Psoas muscle (tissue), 8 donors: ENCODE measurements at regions of chrX and their contacts with region 1.

Region 1: DNA sequence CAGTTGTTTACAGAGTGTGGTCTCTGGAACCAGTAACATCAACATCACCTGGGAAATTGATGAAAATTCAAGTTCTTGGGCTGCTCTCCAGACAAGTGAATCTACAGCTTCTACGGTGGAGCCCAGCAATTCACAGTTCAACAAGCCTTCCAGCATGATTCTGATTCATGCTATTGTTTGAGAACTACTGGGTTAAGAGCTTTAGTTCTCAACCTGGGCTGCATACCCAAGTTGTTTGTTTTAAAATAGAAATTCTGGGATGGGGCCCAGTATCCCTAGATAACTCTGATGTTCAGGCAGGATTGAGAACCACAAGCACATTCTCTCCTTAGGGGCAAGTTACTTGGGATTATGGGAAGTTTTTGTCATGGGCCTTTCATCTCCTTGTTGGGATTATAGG is 37.9 kb upstream of the PGK1 start:
- DNase-seq: no peak
- ATAC-seq: no peak
- H3K4me3 ChIP-seq: no peak overlapping the region
- H3K27ac ChIP-seq: no peak overlapping the region
- H3K4me1 ChIP-seq: no peaks in the 10 kb centered on the region
- H3K27me3 ChIP-seq: peaks cover 0 to 1% (median 0%) of the 10 kb centered on the region in 3 donors
- CTCF ChIP-seq: no peak

Region 2: GRCh38 chrX:78119521-78120227 is 53.6 kb after region 1 on chrX:
- intact Hi-C with region 1: loop called in 1 of 2 experiments (anchors 2 kb)
- DNase-seq: no peak
- ATAC-seq: peak in 1 of 4 donors; percentile 64
- H3K4me3 ChIP-seq: no peak overlapping the region
- H3K27ac ChIP-seq: no peak overlapping the region
- H3K4me1 ChIP-seq: no peaks in the 10 kb centered on the region
- H3K27me3 ChIP-seq: no peaks in the 10 kb centered on the region
- CTCF ChIP-seq: no peak

Region 3: GRCh38 chrX:78333521-78333920 is 267.4 kb after region 1 on chrX:
- intact Hi-C with region 1: no loop called
- DNase-seq: no peak
- ATAC-seq: no peak
- H3K4me3 ChIP-seq: no peak overlapping the region
- H3K27ac ChIP-seq: no peak overlapping the region
- H3K4me1 ChIP-seq: no peaks in the 10 kb centered on the region
- H3K27me3 ChIP-seq: peaks cover 0 to 4% (median 0%) of the 10 kb centered on the region in 3 donors
- CTCF ChIP-seq: no peak